ENCODE measurements at regions of chr11 and their contacts with region 1.

Region 1: GRCh38 chr11:116835791-116836631 is 1.4 kb downstream of the APOA1 start:
- DNase-seq: peak; percentile 89
- ATAC-seq: peak; percentile 97
- H3K4me3 Mint-ChIP-seq: peak overlapping the region; percentile 72
- H3K27ac Mint-ChIP-seq: peak overlapping the region; percentile 34
- H3K4me1 Mint-ChIP-seq: peaks cover 4% of the 10 kb centered on the region
- H3K27me3 Mint-ChIP-seq: no peaks in the 10 kb centered on the region
- CTCF ChIP-seq: peak; percentile 65

Region 2: DNA sequence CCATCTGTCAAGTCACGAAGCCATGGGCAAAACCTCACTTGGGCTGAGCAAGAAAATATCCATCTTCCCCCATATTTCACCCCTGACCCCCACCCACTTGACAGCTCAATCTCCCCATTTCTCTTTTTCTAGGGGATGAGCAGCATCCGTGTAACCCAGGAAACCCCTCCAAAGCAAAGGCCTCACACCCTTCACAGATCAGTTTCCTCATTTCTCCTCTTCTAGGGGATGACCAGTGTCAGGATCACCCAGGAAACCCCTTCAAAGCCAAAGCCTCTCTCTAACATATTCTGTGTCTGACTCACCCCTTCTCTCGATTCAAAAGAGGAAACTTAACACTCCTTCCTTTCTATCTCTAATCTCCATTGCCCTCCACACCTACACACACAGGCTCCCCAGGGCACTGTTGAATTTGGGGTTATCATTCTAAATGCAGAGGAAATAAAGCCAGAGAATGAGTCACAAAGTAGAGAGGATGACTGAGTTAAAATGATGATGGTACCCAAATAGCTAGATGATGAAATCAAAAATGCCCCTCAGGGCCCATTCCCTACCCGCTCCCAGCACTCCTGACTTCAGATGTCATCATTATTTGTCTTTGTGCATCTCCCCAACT is 502.9 kb before region 1 on chr11:
- CTCF ChIA-PET with region 1: no interaction called
- POLR2A ChIA-PET with region 1: no interaction called
- intact Hi-C with region 1: no loop called
- DNase-seq: no peak
- ATAC-seq: no peak
- H3K4me3 Mint-ChIP-seq: no peak overlapping the region
- H3K27ac Mint-ChIP-seq: no peak overlapping the region
- H3K4me1 Mint-ChIP-seq: no peaks in the 10 kb centered on the region
- H3K27me3 Mint-ChIP-seq: peaks cover 7% of the 10 kb centered on the region
- CTCF ChIP-seq: no peak

Region 3: DNA sequence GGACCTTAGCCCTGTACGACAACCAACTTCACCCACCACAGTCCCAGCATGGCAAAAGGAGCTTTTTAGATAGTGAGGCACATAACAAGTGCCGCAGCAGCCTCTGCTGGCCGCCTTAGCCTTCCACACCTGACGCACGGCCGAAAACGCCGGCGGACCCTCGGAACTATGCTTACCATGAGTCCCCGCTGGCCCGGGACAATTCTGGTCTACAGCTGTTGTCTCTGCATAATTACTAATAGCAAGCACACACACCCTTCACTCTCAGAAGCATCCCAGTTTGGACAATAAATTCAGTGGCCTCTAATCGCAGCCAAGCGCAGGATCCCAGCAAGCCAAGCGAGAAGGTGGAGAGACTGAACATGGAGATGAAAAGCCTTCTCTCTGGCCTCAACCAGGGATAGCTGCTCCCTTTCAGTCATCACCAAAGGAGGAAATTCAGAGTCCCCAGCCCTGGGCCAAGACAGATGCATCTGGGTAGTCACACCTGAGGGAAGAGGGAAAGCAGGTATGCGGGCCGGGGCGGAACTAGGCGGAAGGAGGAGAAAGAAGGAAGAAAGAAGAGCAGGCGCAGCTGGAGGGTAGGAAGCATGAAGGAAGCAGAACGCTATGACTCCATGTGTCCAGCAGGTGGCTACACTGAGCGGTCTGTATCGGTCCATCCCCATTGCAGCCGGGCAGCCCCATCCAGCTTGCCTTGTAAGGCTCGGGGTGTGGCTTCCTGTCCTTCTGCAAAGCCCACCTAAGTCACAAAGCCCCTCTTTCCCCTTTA is 103.6 kb before region 1 on chr11:
- CTCF ChIA-PET with region 1: interaction called, 16 read pairs
- POLR2A ChIA-PET with region 1: no interaction called
- intact Hi-C with region 1: no loop called
- DNase-seq: peak; percentile 80
- ATAC-seq: peak; percentile 98
- H3K4me3 Mint-ChIP-seq: no peak overlapping the region
- H3K27ac Mint-ChIP-seq: no peak overlapping the region
- H3K4me1 Mint-ChIP-seq: peaks cover 15% of the 10 kb centered on the region
- H3K27me3 Mint-ChIP-seq: no peaks in the 10 kb centered on the region
- CTCF ChIP-seq: peak; percentile 85

Region 4: GRCh38 chr11:116772443-116773202 is 63.4 kb before region 1 on chr11 and contains the start of gene BUD13:
- CTCF ChIA-PET with region 1: interaction called, 12 read pairs
- POLR2A ChIA-PET with region 1: interaction called, 8 read pairs
- intact Hi-C with region 1: no loop called
- DNase-seq: peak; percentile 95
- ATAC-seq: peak; percentile 94
- H3K4me3 Mint-ChIP-seq: peak within 1 kb of the TSS; percentile 92
- H3K27ac Mint-ChIP-seq: peak within 1 kb of the TSS; percentile 98
- H3K4me1 Mint-ChIP-seq: peaks cover 51% of the 10 kb centered on the region
- H3K27me3 Mint-ChIP-seq: no peaks in the 10 kb centered on the region
- CTCF ChIP-seq: no peak
- total RNA-seq, gene BUD13: 26.6 to 28.6 TPM

Region 5: GRCh38 chr11:116813781-116814471 is 22.1 kb before region 1 on chr11:
- CTCF ChIA-PET with region 1: interaction called, 14 read pairs
- POLR2A ChIA-PET with region 1: interaction called, 3 read pairs
- intact Hi-C with region 1: no loop called
- DNase-seq: no peak
- ATAC-seq: no peak
- H3K4me3 Mint-ChIP-seq: no peak overlapping the region
- H3K27ac Mint-ChIP-seq: no peak overlapping the region
- H3K4me1 Mint-ChIP-seq: no peaks in the 10 kb centered on the region
- H3K27me3 Mint-ChIP-seq: peaks cover 2% of the 10 kb centered on the region
- CTCF ChIP-seq: no peak

Region 6: DNA sequence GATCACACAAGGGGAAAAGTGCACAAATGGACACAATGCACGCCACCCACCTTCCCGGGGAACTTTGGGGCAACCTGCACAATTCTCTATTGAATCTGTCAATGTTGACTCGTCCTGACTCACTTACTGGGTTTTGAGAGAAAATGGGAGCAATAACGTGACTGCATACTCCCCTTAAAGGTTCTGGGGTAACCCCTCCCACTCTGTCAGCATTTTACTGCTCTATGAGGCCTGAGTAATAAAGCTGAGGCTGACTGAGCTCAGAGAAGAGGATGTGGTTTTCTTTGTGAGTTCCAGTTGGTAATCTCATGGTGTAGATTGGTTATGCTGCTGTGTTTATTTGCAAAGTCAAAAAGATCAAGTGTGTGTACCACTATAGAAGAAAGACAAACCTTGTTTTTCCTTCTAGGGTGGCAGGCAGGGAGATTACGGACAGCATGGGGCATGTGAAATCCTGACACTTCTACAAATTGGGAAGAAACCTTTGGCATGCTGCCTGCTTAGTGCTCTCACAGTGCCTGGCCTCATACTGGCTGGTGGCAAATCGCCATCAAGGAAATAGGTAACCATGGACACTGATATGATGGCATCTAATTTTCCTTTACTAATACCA is 17.6 kb after region 1 on chr11:
- CTCF ChIA-PET with region 1: interaction called, 63 read pairs
- POLR2A ChIA-PET with region 1: interaction called, 17 read pairs
- intact Hi-C with region 1: no loop called
- DNase-seq: peak; percentile 74
- ATAC-seq: peak; percentile 94
- H3K4me3 Mint-ChIP-seq: peak overlapping the region; percentile 23
- H3K27ac Mint-ChIP-seq: peak overlapping the region; percentile 87
- H3K4me1 Mint-ChIP-seq: peaks cover 58% of the 10 kb centered on the region
- H3K27me3 Mint-ChIP-seq: no peaks in the 10 kb centered on the region
- CTCF ChIP-seq: no peak

Region 7: GRCh38 chr11:116927163-116927974 is 91.4 kb after region 1 on chr11:
- CTCF ChIA-PET with region 1: interaction called, 13 read pairs
- POLR2A ChIA-PET with region 1: no interaction called
- intact Hi-C with region 1: no loop called
- DNase-seq: peak; percentile 79
- ATAC-seq: peak; percentile 53
- H3K4me3 Mint-ChIP-seq: peak overlapping the region; percentile 12
- H3K27ac Mint-ChIP-seq: peak overlapping the region; percentile 70
- H3K4me1 Mint-ChIP-seq: peaks cover 76% of the 10 kb centered on the region
- H3K27me3 Mint-ChIP-seq: no peaks in the 10 kb centered on the region
- CTCF ChIP-seq: peak; percentile 79